Panc1 (cell line): ENCODE measurements at regions of chr3 and their contacts with region 1.

Region 1: GRCh38 chr3:174755833-174756829 is 103.0 kb upstream of the NAALADL2 start:
- DNase-seq: no peak
- ATAC-seq: no peak
- H3K4me3 ChIP-seq: no peak overlapping the region
- H3K27ac ChIP-seq: no peak overlapping the region
- H3K4me1 ChIP-seq: no peaks in the 10 kb centered on the region
- H3K27me3 ChIP-seq: no peaks in the 10 kb centered on the region
- CTCF ChIP-seq: no peak

Region 2: GRCh38 chr3:174725303-174725702 is 30.8 kb before region 1 on chr3:
- CTCF ChIA-PET with region 1: no interaction called
- POLR2A ChIA-PET with region 1: no interaction called
- in situ Hi-C with region 1: no loop called
- intact Hi-C with region 1: no loop called
- DNase-seq: no peak
- ATAC-seq: no peak
- H3K4me3 ChIP-seq: no peak overlapping the region
- H3K27ac ChIP-seq: no peak overlapping the region
- H3K4me1 ChIP-seq: no peaks in the 10 kb centered on the region
- H3K27me3 ChIP-seq: no peaks in the 10 kb centered on the region
- CTCF ChIP-seq: no peak

Region 3: GRCh38 chr3:174767853-174768382 is 11.8 kb after region 1 on chr3:
- CTCF ChIA-PET with region 1: no interaction called
- POLR2A ChIA-PET with region 1: interaction called, 11 read pairs
- in situ Hi-C with region 1: no loop called
- intact Hi-C with region 1: no loop called
- DNase-seq: no peak
- ATAC-seq: no peak
- H3K4me3 ChIP-seq: no peak overlapping the region
- H3K27ac ChIP-seq: no peak overlapping the region
- H3K4me1 ChIP-seq: no peaks in the 10 kb centered on the region
- H3K27me3 ChIP-seq: no peaks in the 10 kb centered on the region
- CTCF ChIP-seq: no peak